ENCODE measurements at regions of chr12 and their contacts with region 1.

Region 1: DNA sequence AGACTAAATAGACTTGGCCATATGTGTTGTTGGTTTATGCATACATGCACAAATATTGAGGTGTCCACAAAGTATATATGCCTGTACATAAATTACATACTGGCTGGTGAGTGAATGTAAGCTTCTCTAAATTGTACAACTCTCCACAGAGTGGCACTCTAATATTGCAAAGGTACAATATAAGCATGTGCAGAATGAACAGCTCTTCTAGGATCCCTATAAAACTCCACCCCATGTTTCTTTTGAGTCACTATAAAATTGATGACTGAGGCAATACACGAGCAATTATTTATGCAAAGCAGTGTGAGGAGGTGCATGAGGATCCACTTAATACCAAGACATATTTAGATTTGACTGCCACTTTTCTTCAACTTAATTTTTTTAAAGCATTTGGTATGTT is 172.2 kb downstream of the NAV3 start:
- DNase-seq: no peak
- H3K4me3 ChIP-seq: no peak overlapping the region
- H3K27ac ChIP-seq: no peak overlapping the region
- H3K4me1 ChIP-seq: peaks cover 0 to 33% (median 18%) of the 10 kb centered on the region in 6 donors
- H3K27me3 ChIP-seq: no peaks in the 10 kb centered on the region
- CTCF ChIP-seq: no peak
- POLR2A ChIP-seq: no peak

Region 2: GRCh38 chr12:78118036-78118435 is 115.2 kb after region 1 on chr12:
- intact Hi-C with region 1: loop called (anchors 10 kb)
- DNase-seq: no peak
- H3K4me3 ChIP-seq: no peak overlapping the region
- H3K27ac ChIP-seq: no peak overlapping the region
- H3K4me1 ChIP-seq: no peaks in the 10 kb centered on the region
- H3K27me3 ChIP-seq: no peaks in the 10 kb centered on the region
- CTCF ChIP-seq: no peak
- POLR2A ChIP-seq: no peak